ENCODE measurements at regions of chr6 and their contacts with region 1.

Region 1: GRCh38 chr6:139881728-139882211 is 507.3 kb upstream of the CITED2 start:
- DNase-seq: peak in 2 of 10 donors; percentile 12 to 22

Region 2: DNA sequence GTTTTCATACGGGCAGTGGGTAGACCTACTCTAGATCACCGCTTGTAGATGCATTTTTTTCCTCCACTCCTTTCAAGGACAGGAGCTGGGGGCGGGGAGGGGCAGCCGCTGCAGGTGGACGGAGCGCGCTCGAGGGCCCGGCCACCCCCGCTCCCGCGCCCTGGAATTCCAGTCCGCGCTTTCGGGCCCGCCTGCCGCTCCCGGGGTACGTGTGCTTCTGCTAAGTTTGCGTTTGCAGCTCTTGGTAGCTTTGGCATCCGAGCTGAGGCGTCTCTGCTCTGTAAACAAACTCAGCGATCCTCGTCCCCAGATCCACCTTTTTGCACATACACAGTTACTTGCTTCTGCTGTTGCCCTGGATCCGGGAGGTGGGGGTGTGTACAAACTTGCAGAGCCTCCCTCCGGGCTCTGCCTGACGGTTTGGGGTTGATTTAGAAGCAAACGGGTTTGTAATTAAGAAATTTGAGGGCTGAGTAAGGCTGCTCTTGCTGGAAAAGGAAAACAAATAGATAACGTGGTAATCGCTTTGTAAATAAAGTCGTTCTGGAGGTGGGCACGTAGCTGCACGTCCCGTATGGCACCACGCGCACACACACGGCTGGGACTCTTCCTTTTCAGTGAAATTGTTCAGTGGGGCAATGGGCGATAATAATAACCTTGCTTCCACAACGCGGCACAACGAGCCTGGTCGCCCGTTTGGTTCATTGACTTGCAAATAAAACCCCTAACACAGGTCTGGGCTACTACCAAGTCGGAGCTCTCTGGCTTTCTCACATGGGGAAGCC is 506.3 kb before region 1 on chr6:
- intact Hi-C with region 1: loop called (anchors 10 kb)
- DNase-seq: peak; percentile 74 to 97 (median 84)

Region 3: GRCh38 chr6:139829576-139829975 is 52.2 kb before region 1 on chr6:
- intact Hi-C with region 1: no loop called
- DNase-seq: no peak

Region 4: GRCh38 chr6:141562851-141563763 is 1681.3 kb after region 1 on chr6:
- intact Hi-C with region 1: loop called (anchors 5 kb)
- DNase-seq: peak in 6 of 10 donors; percentile 18 to 86 (median 24)